ENCODE measurements at regions of chr20 and their contacts with region 1.

Region 1: DNA sequence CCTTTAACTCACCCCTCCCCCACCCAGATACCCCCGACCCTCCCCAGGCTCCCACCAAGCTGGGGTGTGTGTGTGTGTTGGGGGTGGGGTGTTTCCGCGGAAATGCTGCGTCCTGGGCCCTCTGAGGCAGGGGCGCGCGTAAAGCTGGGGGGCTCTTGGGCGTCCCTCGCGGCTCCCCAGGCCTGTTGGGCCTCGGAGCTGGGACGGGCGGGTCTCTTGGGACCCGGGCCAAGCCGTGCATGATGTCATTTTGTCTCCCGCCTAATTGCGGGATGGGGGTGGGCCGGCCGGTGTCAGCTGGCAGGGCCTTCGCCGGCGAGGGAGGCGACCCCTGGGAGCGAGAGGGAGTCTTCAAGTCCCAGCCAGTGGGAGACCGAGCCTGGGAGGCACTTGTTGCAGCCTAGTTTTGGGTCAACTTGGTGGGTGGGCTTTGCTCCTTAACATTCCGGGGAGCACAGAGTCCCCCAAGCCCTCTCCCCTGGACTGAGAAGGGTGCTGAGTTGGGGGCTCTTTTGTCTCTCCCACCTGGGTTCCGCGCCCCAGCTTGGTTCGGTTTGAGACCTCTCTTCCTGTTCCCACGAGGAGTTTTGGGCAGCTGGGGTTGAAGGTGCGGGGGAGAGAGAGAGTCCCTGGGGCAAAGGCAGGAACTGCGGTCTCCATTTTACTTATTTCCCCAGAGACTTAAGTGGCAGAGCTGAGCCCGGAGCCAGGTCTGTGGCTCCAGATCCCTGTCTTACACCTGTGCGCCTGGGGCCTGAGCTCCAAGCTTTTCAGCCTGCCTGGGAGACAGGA is 623 bp downstream of the MYBL2 start:
- DNase-seq: peak; percentile 21 to 40
- ATAC-seq: peak; percentile 31 to 34; a peak in 4 of 6 replicates
- H3K4me3 ChIP-seq: peak overlapping the region; percentile 67
- H3K27ac ChIP-seq: peak overlapping the region; percentile 68 to 95
- H3K4me1 ChIP-seq: peaks cover 29% of the 10 kb centered on the region
- CTCF ChIP-seq: no peak
- EP300 ChIP-seq: no peak
- POLR2A ChIP-seq: no peak
- RAD21 ChIP-seq: no peak

Region 2: DNA sequence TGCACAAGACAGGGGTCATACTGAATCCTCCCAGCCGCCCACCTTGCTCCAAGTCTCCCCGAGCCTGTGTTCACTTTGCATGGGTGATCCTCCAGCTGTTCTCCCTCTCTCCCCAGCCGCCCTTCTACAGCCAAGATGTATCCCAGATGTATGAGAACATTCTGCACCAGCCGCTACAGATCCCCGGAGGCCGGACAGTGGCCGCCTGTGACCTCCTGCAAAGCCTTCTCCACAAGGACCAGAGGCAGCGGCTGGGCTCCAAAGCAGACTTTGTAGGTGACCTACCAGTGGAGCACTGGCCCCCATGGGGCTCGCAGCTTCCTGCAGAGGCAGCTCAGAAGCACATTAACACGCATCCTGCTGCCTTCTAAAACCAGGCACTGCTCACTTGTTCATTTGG is 91.4 kb before region 1 on chr20:
- CTCF ChIA-PET with region 1: no interaction called
- POLR2A ChIA-PET with region 1: interaction called, 10 read pairs
- DNase-seq: no peak
- ATAC-seq: no peak
- H3K4me3 ChIP-seq: no peak overlapping the region
- H3K27ac ChIP-seq: no peak overlapping the region
- H3K4me1 ChIP-seq: no peaks in the 10 kb centered on the region
- CTCF ChIP-seq: no peak
- EP300 ChIP-seq: no peak
- POLR2A ChIP-seq: no peak
- RAD21 ChIP-seq: no peak

Region 3: GRCh38 chr20:43655937-43656336 is 11.6 kb before region 1 on chr20:
- CTCF ChIA-PET with region 1: no interaction called
- POLR2A ChIA-PET with region 1: no interaction called
- DNase-seq: no peak
- ATAC-seq: no peak
- H3K4me3 ChIP-seq: no peak overlapping the region
- H3K27ac ChIP-seq: no peak overlapping the region
- H3K4me1 ChIP-seq: peaks cover 7% of the 10 kb centered on the region; the same call in 2 of the 3 replicates
- CTCF ChIP-seq: no peak
- EP300 ChIP-seq: no peak
- POLR2A ChIP-seq: no peak
- RAD21 ChIP-seq: no peak

Measured in A549 (cell line).